Mammary epithelial cell (primary cell): ENCODE measurements at regions of chr17 and their contacts with region 1.

Region 1: DNA sequence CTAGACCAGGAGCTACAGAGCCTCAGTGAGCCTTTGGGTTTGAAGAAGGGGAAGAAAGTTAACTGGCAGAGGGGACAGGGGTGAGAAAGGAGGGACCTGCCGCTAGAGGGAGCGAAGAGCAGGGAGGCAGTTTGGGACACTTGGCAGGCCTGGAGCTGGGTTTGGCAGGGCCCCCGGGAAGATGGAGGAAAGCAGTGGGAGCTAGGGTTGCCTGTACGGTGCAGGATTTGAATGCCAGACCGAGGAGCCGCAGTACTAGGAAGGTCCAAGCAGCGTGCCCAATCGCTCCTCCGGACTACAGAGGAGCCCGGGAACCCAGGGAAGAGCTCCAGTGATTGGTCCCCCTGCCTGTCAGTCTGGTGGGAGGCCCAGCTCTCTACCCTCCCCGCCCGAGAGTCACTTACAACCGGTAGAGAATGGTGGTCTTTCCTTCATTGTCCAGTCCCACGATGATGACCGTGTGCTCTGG is 1.3 kb downstream of the ARL5C start:
- DNase-seq: peak; percentile 71
- H3K4me3 ChIP-seq: no peak overlapping the region
- H3K27ac ChIP-seq: no peak overlapping the region
- H3K4me1 ChIP-seq: peaks cover 10% of the 10 kb centered on the region
- H3K27me3 ChIP-seq: no peaks in the 10 kb centered on the region
- CTCF ChIP-seq: peak; percentile 78 to 89

Region 2: GRCh38 chr17:38735161-38735997 is 429.3 kb before region 1 on chr17:
- CTCF ChIA-PET with region 1: interaction called, 26 read pairs
- dilution Hi-C with region 1: no loop called
- in situ Hi-C with region 1: no loop called
- intact Hi-C with region 1: no loop called
- DNase-seq: no peak
- H3K4me3 ChIP-seq: no peak overlapping the region
- H3K27ac ChIP-seq: no peak overlapping the region
- H3K4me1 ChIP-seq: peaks cover 8% of the 10 kb centered on the region
- H3K27me3 ChIP-seq: no peaks in the 10 kb centered on the region
- CTCF ChIP-seq: peak; percentile 68 to 92

Region 3: DNA sequence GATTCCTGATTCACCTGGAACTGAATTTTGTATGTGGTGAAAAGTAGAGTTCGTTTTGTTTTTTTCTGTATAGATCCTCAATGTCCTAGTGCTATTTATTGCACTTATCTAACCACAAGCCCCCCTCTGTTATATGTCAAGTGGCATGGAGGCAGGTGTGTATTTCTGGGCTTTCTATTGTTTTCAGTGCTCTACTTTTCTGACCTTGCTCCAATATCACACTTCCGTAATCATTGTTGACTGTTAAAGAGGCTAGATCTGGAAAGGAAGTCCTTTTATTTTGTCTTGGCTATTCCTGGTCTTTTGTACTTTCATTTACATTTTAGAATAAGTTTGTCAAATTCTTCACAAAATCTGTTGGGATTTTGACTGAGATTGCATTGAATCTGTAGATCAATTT is 170.7 kb before region 1 on chr17:
- CTCF ChIA-PET with region 1: no interaction called
- dilution Hi-C with region 1: loop called (anchors 5 kb)
- in situ Hi-C with region 1: loop called in 1 of 2 experiments (anchors 25 kb)
- intact Hi-C with region 1: no loop called
- DNase-seq: no peak
- H3K4me3 ChIP-seq: no peak overlapping the region
- H3K27ac ChIP-seq: no peak overlapping the region
- H3K4me1 ChIP-seq: no peaks in the 10 kb centered on the region
- H3K27me3 ChIP-seq: no peaks in the 10 kb centered on the region
- CTCF ChIP-seq: no peak

Region 4: GRCh38 chr17:39069114-39069756 is 95.5 kb before region 1 on chr17:
- CTCF ChIA-PET with region 1: no interaction called
- dilution Hi-C with region 1: loop called (anchors 5 kb)
- in situ Hi-C with region 1: no loop called
- intact Hi-C with region 1: no loop called
- DNase-seq: peak; percentile 32
- H3K4me3 ChIP-seq: no peak overlapping the region
- H3K27ac ChIP-seq: no peak overlapping the region
- H3K4me1 ChIP-seq: peaks cover 19% of the 10 kb centered on the region
- H3K27me3 ChIP-seq: no peaks in the 10 kb centered on the region
- CTCF ChIP-seq: peak; percentile 70 to 75

Region 5: DNA sequence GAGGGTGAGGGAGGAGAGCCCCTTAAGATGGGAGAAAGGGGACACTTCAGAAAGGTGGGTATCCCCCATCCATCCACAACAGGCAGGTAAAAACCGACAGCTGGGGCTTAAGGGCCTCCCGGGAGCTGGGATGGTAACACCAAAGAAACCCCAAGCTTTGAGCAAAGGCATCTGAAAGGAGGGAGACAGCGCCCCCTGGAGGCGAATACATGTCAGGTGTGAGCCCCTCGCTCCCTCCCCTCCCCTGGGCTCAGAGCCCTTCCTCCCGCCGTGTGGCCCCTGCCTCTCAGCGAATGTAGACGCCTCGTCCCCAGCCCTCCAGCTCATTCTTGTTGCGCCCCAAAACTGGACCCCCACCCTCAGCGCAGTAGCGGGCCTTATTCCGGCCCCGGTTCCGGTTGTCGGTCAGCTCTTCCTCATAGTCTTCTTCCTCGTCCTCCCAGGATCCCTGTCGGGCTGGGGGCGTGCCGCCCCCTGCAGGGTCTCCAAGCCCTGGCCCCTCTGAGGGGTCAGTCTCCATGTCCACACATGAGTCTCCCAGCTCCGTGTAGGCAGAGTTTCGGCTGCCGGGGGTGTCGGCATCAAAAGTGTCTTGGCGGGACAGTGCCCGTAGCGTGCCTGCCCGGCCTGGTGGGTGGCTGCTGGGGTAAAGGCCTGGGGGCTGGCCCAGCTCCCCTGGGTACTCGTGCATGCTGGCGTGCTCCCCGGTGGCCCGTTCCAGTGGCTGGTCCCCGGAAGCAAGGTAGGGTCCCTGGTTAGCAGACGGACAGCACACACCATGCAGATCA is 10.4 kb after region 1 on chr17:
- CTCF ChIA-PET with region 1: interaction called, 10 read pairs
- dilution Hi-C with region 1: no loop called
- in situ Hi-C with region 1: no loop called
- intact Hi-C with region 1: no loop called
- DNase-seq: no peak
- H3K4me3 ChIP-seq: no peak overlapping the region
- H3K27ac ChIP-seq: no peak overlapping the region
- H3K4me1 ChIP-seq: peaks cover 10% of the 10 kb centered on the region
- H3K27me3 ChIP-seq: no peaks in the 10 kb centered on the region
- CTCF ChIP-seq: peak; percentile 67 to 76

Region 6: DNA sequence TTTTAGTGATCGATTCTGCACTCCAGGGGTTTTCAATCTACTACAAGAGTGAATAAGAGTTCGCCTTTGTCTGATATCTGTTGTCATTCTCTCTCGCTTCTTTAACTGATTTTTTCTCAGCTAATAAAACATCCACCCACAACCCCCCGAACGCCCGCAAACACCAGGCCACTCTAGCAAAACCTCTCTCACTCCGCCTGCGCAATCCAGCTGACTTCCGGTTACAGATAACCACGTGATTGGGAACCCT is 35.0 kb after region 1 on chr17:
- CTCF ChIA-PET with region 1: interaction called, 3 read pairs
- dilution Hi-C with region 1: loop called (anchors 5 kb)
- in situ Hi-C with region 1: no loop called
- intact Hi-C with region 1: no loop called
- DNase-seq: peak; percentile 85
- H3K4me3 ChIP-seq: peak overlapping the region; percentile 72 to 91 (median 84)
- H3K27ac ChIP-seq: peak overlapping the region; percentile 100
- H3K4me1 ChIP-seq: peaks cover 33% of the 10 kb centered on the region
- H3K27me3 ChIP-seq: no peaks in the 10 kb centered on the region
- CTCF ChIP-seq: no peak